RWPE1 (cell line): ENCODE measurements at regions of chr17 and their contacts with region 1.

Region 1: GRCh38 chr17:7782237-7782636 is 51.8 kb upstream of the KDM6B start:
- DNase-seq: no peak
- H3K27ac ChIP-seq: no peak overlapping the region
- CTCF ChIP-seq: no peak

Region 2: GRCh38 chr17:7363311-7363710 is 418.9 kb before region 1 on chr17:
- CTCF ChIA-PET with region 1: no interaction called
- POLR2A ChIA-PET with region 1: interaction called, 10 read pairs
- DNase-seq: no peak
- H3K27ac ChIP-seq: peak overlapping the region; percentile 39
- CTCF ChIP-seq: no peak